Pancreas (tissue), 10 donors: ENCODE measurements at regions of chr4 and their contacts with region 1.

Region 1: GRCh38 chr4:76752861-76753501 is 145.0 kb downstream of the SOWAHB start:
- DNase-seq: no peak
- ATAC-seq: peak in 1 of 4 donors; percentile 32
- H3K4me3 ChIP-seq: no peak overlapping the region
- H3K27ac ChIP-seq: no peak overlapping the region
- H3K4me1 ChIP-seq: no peaks in the 10 kb centered on the region
- H3K27me3 ChIP-seq: no peaks in the 10 kb centered on the region
- CTCF ChIP-seq: no peak

Region 2: DNA sequence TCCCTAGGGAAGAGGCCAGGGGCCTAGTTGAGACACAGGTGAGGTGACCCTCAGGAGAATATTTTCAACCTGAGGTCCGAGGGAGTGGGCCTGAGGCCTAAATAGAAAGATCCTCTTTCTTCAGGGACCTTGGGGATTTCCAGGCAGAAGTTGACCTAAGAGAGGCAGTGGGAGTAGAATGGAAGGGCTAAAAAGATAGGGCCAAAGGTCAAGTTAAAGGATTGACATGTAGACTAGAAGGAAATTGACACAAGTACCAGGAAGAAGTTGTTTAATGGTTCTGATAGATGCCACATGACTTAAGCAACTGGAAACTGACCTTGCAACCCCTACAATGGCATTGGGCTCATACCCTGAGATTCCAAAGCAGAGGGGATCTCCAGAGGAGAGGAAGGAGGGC is 241.0 kb before region 1 on chr4:
- intact Hi-C with region 1: loop called (anchors 2 to 10 kb)
- DNase-seq: no peak
- ATAC-seq: peak in 3 of 4 donors; percentile 11 to 43 (median 37)
- H3K4me3 ChIP-seq: no peak overlapping the region
- H3K27ac ChIP-seq: peak overlapping the region in 2 of 4 donors; percentile 51 to 57
- H3K4me1 ChIP-seq: peaks cover 0 to 12% (median 7%) of the 10 kb centered on the region in 3 donors
- H3K27me3 ChIP-seq: no peaks in the 10 kb centered on the region
- CTCF ChIP-seq: no peak